ENCODE measurements at regions of chr7 and their contacts with region 1.

Region 1: DNA sequence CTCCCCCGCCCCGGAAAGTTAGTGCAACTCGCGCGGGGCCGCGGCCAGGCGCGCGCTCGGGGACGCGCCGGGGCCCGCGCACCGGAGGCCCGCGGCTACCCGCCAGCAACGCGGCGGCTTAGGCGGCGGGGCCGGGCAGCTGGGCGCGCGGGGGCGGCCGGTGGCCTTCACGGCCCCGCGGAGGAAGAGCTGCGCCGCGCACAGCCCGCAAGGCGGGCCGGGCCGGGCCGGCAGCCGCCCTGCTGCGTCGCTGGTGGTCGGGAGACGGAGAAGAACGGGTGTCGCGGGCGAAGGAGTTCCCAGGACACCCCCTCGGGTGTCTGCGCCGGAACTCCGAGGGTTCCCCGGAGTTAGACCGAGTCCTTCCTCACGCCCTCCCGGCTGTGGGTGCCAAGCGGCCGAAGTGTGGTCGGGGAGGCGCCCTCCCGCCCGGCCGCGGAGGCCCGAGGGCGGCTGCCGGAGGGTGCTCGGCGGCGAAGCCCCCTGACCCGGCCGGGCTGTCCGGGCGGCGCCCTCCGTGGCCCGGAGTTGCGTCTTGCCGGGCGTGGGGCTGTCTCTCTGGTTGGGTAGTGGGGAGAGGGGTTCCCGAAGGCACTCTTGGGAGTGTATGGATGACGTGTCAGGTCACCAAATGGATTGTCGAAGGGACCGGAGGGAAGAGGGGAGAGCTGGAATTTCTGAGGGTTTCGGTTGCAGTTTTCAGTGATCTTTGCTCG is 584 bp downstream of the ST7 start:
- DNase-seq: peak; percentile 84 to 90 (median 84)
- ATAC-seq: peak; percentile 59
- H3K4me3 ChIP-seq: peak overlapping the region; percentile 79
- H3K27ac ChIP-seq: peak overlapping the region; percentile 95
- H3K4me1 ChIP-seq: peaks cover 26 to 60% of the 10 kb centered on the region in 2 experiments
- H3K27me3 ChIP-seq: no peaks in the 10 kb centered on the region
- CTCF ChIP-seq: peak in 1 of 3 experiments; percentile 7; a peak in 1 of 6 replicates
- EP300 ChIP-seq: peak; percentile 60
- POLR2A ChIP-seq: peak; percentile 70
- RAD21 ChIP-seq: no peak

Region 2: DNA sequence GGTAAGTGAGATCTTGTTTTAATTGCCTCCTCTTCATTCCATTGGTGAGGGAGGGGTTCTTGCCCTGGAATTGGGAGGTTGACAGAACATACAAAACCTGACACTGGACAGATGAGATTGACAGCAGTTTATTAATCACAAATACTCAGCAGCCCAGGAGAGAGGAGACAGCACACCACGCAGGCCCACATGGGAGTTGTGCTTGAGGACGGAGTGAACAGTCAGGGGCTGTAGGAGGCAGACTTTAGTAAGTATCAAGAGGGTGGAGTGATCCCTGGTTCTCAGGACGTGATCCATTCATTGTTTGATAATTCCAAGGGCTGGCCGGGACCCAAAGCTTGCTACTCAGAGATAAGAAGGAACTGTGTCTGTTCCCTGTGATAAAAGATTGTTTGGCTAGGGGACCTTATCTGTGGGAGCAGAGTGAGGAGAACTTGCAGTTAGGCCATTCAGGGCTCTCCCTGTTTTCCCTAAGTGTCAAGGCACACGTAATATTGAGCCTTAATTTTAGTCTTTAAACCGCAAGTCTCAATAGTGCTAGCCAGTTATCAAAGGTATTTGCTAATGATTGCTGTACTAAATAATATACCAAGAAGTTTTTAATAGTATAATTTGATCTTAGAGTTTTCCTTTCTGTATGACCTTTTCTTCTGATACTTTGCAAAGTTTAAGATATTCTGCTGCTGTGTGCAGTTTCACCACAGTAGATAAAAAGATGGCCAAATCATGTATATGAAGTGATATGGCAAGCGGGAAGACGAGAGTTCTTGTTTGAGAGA is 77.0 kb before region 1 on chr7:
- CTCF ChIA-PET with region 1: no interaction called
- POLR2A ChIA-PET with region 1: no interaction called
- in situ Hi-C with region 1: no loop called
- intact Hi-C with region 1: loop called (anchors 1 kb)
- DNase-seq: peak; percentile 88 to 99 (median 92)
- ATAC-seq: peak; percentile 99
- H3K4me3 ChIP-seq: no peak overlapping the region; the same call in 1 of the 2 replicates
- H3K27ac ChIP-seq: peak overlapping the region; percentile 64
- H3K4me1 ChIP-seq: peaks cover 14 to 34% of the 10 kb centered on the region in 2 experiments
- H3K27me3 ChIP-seq: no peaks in the 10 kb centered on the region
- CTCF ChIP-seq: peak; percentile 68 to 83 (median 80)
- EP300 ChIP-seq: peak; percentile 100
- POLR2A ChIP-seq: no peak
- RAD21 ChIP-seq: peak; percentile 42 to 70; a peak in 3 of 4 replicates

Region 3: DNA sequence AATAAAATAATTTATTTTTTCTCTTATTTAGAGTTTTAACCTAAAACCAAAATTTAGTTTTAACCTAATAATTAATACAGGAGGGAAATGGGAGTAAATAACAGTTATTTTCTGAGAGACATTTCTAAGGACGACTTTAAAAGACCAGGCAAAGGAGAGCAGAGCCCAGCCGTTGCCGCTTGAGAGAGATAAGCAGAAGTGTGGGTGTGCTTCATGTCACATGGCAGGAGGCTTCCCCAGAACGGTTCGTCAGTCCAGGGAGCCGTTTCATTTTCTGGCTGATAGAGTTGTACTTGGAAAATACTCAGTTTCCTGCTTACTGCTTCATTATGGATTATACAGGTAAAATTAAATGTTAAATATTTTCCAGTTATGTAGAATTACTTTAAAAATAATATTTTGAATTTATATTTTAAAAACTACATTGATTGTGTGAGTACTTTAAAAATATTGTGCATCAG is 60.8 kb after region 1 on chr7:
- CTCF ChIA-PET with region 1: no interaction called
- POLR2A ChIA-PET with region 1: interaction called, 4 read pairs
- in situ Hi-C with region 1: no loop called
- intact Hi-C with region 1: loop called (anchors 2 kb)
- DNase-seq: peak; percentile 79 to 97 (median 89)
- ATAC-seq: peak; percentile 88
- H3K4me3 ChIP-seq: peak overlapping the region; percentile 40
- H3K27ac ChIP-seq: peak overlapping the region; percentile 85
- H3K4me1 ChIP-seq: peaks cover 13 to 72% of the 10 kb centered on the region in 2 experiments
- H3K27me3 ChIP-seq: no peaks in the 10 kb centered on the region
- CTCF ChIP-seq: no peak
- EP300 ChIP-seq: peak; percentile 95
- POLR2A ChIP-seq: peak; percentile 81
- RAD21 ChIP-seq: peak in 1 of 2 experiments; percentile 17; a peak in 1 of 4 replicates

Region 4: GRCh38 chr7:117791877-117792780 is 838.2 kb after region 1 on chr7:
- CTCF ChIA-PET with region 1: no interaction called
- POLR2A ChIA-PET with region 1: no interaction called
- in situ Hi-C with region 1: no loop called
- intact Hi-C with region 1: loop called (anchors 10 kb)
- DNase-seq: peak; percentile 44 to 90 (median 63)
- ATAC-seq: peak; percentile 91
- H3K4me3 ChIP-seq: peak overlapping the region; percentile 1; the same call in 1 of the 2 replicates
- H3K27ac ChIP-seq: peak overlapping the region; percentile 74
- H3K4me1 ChIP-seq: peaks cover 15 to 35% of the 10 kb centered on the region in 2 experiments; a peak in 4 of 5 replicates
- H3K27me3 ChIP-seq: no peaks in the 10 kb centered on the region
- CTCF ChIP-seq: peak; percentile 59 to 74 (median 59); a peak in 5 of 6 replicates
- EP300 ChIP-seq: peak; percentile 98
- POLR2A ChIP-seq: no peak
- RAD21 ChIP-seq: peak; percentile 33 to 47; a peak in 3 of 4 replicates

Measured in K562 (cell line).